ENCODE measurements at regions of chr1 and their contacts with region 1.

Region 1: DNA sequence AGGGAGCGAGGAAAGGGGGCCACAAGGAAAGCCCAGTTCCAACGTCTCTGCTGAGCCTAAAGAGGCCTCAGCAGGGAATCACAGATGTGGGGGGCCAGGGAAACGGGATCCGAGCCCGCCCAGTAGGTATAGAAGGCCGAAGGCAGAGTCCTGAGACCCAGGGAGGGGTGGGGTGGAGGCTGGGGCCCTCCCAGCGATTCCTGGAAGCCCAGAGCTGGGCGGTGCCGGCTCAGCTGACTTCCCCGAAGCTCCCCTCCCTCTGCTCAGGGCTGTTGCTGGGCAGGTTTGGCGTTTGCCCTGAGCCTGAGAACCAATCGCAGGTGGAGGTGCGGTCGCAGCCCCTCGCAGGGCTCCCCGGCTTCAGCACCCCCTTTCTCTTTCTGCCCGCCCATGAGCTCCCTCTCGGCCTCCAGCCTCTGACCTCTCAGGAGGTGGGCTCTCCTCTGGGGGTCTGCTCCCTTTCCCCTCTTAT is 12.8 kb downstream of the ADAMTSL4 start:
- DNase-seq: peak; percentile 91 to 95 (median 93)
- H3K4me3 ChIP-seq: peak overlapping the region; percentile 56
- H3K27ac ChIP-seq: peak overlapping the region; percentile 96 to 99
- H3K4me1 ChIP-seq: peaks cover 45% of the 10 kb centered on the region
- H3K27me3 ChIP-seq: no peaks in the 10 kb centered on the region
- CTCF ChIP-seq: no peak
- EP300 ChIP-seq: peak; percentile 99
- POLR2A ChIP-seq: peak; percentile 29

Region 2: DNA sequence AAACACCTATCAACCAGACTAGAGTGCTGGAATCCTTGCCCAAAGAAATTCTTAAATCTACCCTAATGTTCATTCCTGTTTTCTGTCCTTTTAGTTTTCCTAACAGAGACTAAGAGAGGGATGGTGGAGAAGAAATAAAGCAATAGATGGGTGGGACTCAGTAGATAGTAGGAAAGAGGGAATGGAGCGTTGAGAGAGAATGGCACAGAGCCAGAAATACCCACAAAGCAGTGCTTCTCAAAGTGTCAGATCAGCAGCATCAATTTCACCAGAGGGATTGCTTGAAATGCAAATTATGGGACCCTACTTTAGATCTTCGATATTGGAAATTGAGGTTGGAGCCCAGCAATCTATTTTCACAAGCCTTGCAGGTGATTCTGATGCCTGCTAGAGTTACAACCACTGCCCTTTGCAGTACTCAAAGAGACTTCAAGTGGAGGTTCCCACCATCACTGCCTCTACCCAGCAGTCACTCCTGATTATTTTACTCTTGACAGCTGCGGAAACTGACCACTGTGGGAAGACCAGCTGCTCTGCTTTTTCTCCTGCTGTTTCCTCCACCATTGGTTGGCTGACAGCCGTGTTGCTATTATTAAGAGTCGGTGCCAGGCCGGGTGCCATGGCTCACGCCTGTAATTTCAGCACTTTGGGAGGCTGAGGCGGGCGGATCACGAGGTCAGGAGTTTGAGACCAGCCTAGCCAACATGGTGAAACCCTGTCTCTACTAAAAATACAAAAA is 252.1 kb before region 1 on chr1:
- intact Hi-C with region 1: no loop called
- DNase-seq: peak in 1 of 5 donors; percentile 11
- H3K4me3 ChIP-seq: no peak overlapping the region
- H3K27ac ChIP-seq: no peak overlapping the region
- H3K4me1 ChIP-seq: no peaks in the 10 kb centered on the region
- H3K27me3 ChIP-seq: no peaks in the 10 kb centered on the region
- CTCF ChIP-seq: no peak
- EP300 ChIP-seq: no peak
- POLR2A ChIP-seq: no peak

Region 3: GRCh38 chr1:150578965-150579798 is 17.2 kb after region 1 on chr1 and contains the start of gene MCL1:
- intact Hi-C with region 1: loop called in 1 of 4 experiments (anchors 2 kb)
- DNase-seq: peak; percentile 90 to 96 (median 94)
- H3K4me3 ChIP-seq: peak within 1 kb of the TSS; percentile 93
- H3K27ac ChIP-seq: peak within 1 kb of the TSS; percentile 96 to 97
- H3K4me1 ChIP-seq: peaks cover 9% of the 10 kb centered on the region
- H3K27me3 ChIP-seq: no peaks in the 10 kb centered on the region
- CTCF ChIP-seq: peak in 2 of 3 donors; percentile 20 to 40
- EP300 ChIP-seq: peak; percentile 79
- POLR2A ChIP-seq: peak; percentile 91
- total RNA-seq, gene MCL1: 91.1 to 280 (median 145) TPM

Region 4: GRCh38 chr1:150621497-150622302 is 59.7 kb after region 1 on chr1:
- intact Hi-C with region 1: loop called (anchors 5 to 10 kb)
- DNase-seq: peak in 2 of 5 donors; percentile 32 to 73
- H3K4me3 ChIP-seq: no peak overlapping the region
- H3K27ac ChIP-seq: peak overlapping the region; percentile 39 to 43
- H3K4me1 ChIP-seq: peaks cover 10% of the 10 kb centered on the region
- H3K27me3 ChIP-seq: no peaks in the 10 kb centered on the region
- CTCF ChIP-seq: peak in 2 of 3 donors; percentile 70 to 78
- EP300 ChIP-seq: no peak
- POLR2A ChIP-seq: no peak

Region 5: GRCh38 chr1:150979092-150980056 is 417.4 kb after region 1 on chr1:
- intact Hi-C with region 1: loop called in 1 of 4 experiments (anchors 5 kb)
- DNase-seq: peak; percentile 86 to 94 (median 90)
- H3K4me3 ChIP-seq: no peak overlapping the region
- H3K27ac ChIP-seq: peak overlapping the region; percentile 24 to 58
- H3K4me1 ChIP-seq: peaks cover 6% of the 10 kb centered on the region
- H3K27me3 ChIP-seq: no peaks in the 10 kb centered on the region
- CTCF ChIP-seq: peak; percentile 98 to 100 (median 99)
- EP300 ChIP-seq: no peak
- POLR2A ChIP-seq: no peak

Region 6: GRCh38 chr1:152001391-152002249 is 1439.6 kb after region 1 on chr1:
- intact Hi-C with region 1: no loop called
- DNase-seq: peak; percentile 74 to 91 (median 86)
- H3K4me3 ChIP-seq: no peak overlapping the region
- H3K27ac ChIP-seq: no peak overlapping the region
- H3K4me1 ChIP-seq: no peaks in the 10 kb centered on the region
- H3K27me3 ChIP-seq: no peaks in the 10 kb centered on the region
- CTCF ChIP-seq: peak; percentile 72 to 86 (median 81)
- EP300 ChIP-seq: no peak
- POLR2A ChIP-seq: no peak

Measured in ovary (tissue), 10 donors.